ENCODE measurements at regions of chr9 and their contacts with region 1.

Region 1: DNA sequence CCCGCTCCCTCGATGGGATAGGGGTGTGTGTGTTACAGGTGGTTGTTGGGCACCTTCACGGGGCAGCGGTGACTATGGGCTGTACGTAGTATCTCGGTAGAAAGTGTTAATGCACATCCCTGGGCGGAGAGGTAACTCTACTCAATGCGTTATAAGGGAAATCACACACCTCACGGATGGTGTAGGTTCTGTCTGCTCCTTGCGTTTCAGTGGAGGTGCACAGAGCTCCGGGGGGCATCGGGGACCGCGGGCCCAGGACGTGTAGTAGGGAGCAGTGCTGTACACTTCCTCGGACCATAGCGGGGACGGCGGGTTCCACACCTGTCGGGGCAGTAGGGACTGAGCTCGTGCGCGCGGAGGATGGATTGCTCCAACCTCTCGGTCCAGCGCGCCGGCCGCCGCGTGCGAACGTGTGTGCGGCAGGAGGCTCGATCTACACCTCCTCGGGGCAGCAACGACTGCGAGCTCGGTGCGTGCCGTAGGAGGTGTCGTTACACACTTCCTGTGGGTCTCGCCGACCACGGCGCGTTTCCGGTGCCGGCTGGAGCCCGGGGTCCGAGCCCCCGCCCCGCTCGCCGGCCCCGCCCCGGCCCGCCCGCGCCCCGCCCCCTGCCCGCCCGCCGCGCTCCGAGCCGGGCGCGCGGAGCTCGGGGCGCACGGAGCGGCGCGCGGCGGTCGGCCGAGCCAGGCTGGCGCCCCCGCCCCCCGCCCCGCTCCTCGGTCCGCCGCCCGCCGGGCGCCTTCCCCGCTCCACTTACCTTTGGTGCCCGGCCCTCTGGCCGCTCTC is at the start of gene KIAA1958:
- DNase-seq: no peak
- H3K4me3 ChIP-seq: peak within 1 kb of the TSS; percentile 85 to 94 (median 89)
- H3K27ac ChIP-seq: peak within 1 kb of the TSS; percentile 78 to 82 (median 80)
- H3K4me1 ChIP-seq: peaks cover 5 to 20% (median 15%) of the 10 kb centered on the region in 4 donors
- H3K27me3 ChIP-seq: no peaks in the 10 kb centered on the region
- CTCF ChIP-seq: no peak
- EP300 ChIP-seq: no peak
- POLR2A ChIP-seq: no peak
- total RNA-seq, gene KIAA1958: 2.2 to 5.8 (median 3.2) TPM

Region 2: GRCh38 chr9:112379177-112380101 is 107.0 kb before region 1 on chr9:
- intact Hi-C with region 1: loop called (anchors 5 kb)
- DNase-seq: peak; percentile 100
- H3K4me3 ChIP-seq: peak overlapping the region; percentile 65 to 99 (median 84)
- H3K27ac ChIP-seq: peak overlapping the region; percentile 95 to 99 (median 98)
- H3K4me1 ChIP-seq: peaks cover 39 to 61% (median 58%) of the 10 kb centered on the region in 4 donors
- H3K27me3 ChIP-seq: no peaks in the 10 kb centered on the region
- CTCF ChIP-seq: peak in 1 of 3 experiments; percentile 23
- EP300 ChIP-seq: no peak
- POLR2A ChIP-seq: peak; percentile 83

Region 3: DNA sequence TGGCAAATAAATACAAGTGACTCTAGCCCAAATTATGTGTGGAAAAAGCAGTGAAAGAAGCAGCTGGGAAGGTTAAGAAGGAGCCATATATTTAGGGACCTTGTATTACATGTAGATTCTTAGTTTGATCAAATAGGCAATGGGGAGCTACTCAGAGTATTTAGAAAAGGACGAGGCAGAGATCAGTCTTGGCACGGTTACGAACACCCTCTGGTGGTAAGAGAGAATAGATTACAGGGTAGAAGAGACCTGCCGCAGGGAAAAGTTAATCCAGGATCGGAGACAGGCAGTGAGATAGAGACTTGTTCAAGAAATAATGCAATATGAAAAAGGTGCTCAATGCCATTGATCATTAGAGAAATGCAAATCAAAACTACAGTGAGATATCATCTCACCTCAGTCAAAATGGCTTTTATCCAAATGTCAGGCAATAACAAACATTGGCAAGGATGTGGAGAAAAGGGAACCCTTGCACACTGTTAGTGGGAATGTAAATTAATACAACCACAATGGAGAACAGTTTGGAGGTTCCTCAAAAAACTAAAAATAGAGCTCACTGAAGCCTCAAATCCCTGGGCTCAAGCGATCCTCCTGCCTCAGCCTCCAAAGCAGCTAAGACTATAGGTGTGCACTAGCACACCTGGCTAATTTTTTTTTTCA is 219.5 kb after region 1 on chr9:
- intact Hi-C with region 1: loop called (anchors 5 kb)
- DNase-seq: no peak
- H3K4me3 ChIP-seq: no peak overlapping the region
- H3K27ac ChIP-seq: no peak overlapping the region
- H3K4me1 ChIP-seq: peaks cover 0 to 6% (median 0%) of the 10 kb centered on the region in 4 donors
- H3K27me3 ChIP-seq: no peaks in the 10 kb centered on the region
- CTCF ChIP-seq: peak in 1 of 3 experiments; percentile 29
- EP300 ChIP-seq: no peak
- POLR2A ChIP-seq: no peak

Region 4: GRCh38 chr9:112764344-112764743 is 277.9 kb after region 1 on chr9:
- intact Hi-C with region 1: no loop called
- DNase-seq: no peak
- H3K4me3 ChIP-seq: no peak overlapping the region
- H3K27ac ChIP-seq: no peak overlapping the region
- H3K4me1 ChIP-seq: no peaks in the 10 kb centered on the region
- H3K27me3 ChIP-seq: no peaks in the 10 kb centered on the region
- CTCF ChIP-seq: no peak
- EP300 ChIP-seq: no peak
- POLR2A ChIP-seq: no peak

Region 5: DNA sequence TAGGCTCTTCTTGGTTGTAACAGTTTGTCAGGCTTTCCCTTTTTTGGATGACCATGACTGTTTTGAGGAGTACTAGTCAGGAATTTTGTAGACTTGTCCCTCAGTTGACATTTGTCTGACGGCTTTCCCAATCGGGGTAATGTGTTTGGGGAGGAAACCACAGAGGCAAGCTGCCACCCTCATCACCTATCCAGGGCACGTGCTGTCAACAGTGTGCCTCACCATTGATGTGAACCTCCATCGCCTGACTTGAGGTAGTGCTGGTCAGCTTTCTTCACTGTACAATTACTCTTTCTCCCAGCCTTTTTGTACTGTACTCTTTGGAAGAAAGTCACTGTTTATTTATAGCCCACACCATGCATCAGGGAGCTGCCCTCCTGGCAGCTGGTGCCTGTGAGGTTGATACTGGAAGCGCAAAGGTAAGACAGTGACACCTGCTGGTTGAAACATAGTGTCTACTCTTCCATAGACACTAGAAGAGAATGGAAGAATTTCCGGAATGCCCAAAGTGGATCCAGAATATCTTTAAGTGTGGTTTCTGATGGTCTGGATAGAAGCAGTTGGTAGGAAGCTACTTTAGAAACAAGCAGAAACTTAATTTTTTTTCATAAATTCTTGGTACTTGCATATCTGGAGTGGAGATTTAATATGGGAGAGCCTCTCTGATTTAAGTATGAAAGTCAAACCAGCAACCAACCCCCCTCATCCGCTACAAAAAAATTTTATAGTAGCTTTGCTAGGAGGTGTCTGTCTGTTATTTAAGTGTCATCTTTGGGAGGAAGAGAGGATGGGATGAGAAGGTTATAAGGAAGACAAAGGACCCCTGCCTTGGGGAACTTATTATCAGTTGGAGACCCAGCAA is 333.5 kb after region 1 on chr9:
- intact Hi-C with region 1: loop called (anchors 10 kb)
- DNase-seq: peak; percentile 75
- H3K4me3 ChIP-seq: no peak overlapping the region
- H3K27ac ChIP-seq: no peak overlapping the region
- H3K4me1 ChIP-seq: peaks cover 5 to 13% (median 8%) of the 10 kb centered on the region in 4 donors
- H3K27me3 ChIP-seq: no peaks in the 10 kb centered on the region
- CTCF ChIP-seq: peak; percentile 67 to 72 (median 69)
- EP300 ChIP-seq: no peak
- POLR2A ChIP-seq: no peak

Measured in esophagus muscularis mucosa (tissue), 4 donors.